ENCODE measurements at regions of chr17 and their contacts with region 1.

Region 1: DNA sequence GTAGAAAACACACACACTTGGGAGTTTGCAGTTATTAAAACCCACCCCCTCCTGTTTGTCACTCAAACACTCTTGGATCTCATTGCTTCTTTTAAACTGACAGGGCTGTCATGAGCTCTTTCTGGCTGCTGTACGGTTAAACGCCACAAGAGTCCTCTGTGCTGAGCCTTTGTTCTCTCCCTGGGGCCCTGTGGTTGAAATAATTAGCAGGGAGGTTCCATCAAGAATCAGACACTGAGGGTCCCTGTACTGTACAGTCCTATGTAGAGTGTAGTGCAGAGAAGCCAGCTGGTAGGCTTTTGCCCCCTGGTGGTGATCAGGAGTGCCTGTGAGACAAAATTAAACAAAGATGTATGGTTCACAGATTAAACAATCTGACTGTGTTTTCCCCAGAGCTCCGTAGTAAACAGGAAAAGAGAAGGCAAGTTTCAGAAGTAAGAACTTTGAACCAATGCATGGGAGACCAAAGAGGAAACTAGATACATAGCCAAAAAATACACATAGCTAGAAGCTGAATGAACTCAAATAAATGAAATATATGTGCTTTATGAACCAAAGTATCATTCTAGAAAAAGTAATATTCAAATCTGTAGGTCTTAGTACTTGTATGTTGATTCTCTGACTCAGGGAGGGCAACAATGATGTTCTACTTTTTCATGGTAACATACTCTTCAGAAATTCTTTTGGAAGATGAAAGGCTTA is 1.4 kb upstream of the SSH2 start:
- DNase-seq: peak; percentile 29 to 89 (median 78)
- ATAC-seq: peak; percentile 84
- H3K4me3 ChIP-seq: peak overlapping the region; percentile 81
- H3K4me3 Mint-ChIP-seq: no peak overlapping the region
- H3K27ac ChIP-seq: peak overlapping the region; percentile 85
- H3K27ac Mint-ChIP-seq: no peak overlapping the region
- H3K4me1 ChIP-seq: peaks cover 13 to 25% of the 10 kb centered on the region in 2 donors
- H3K4me1 Mint-ChIP-seq: peaks cover 24 to 35% (median 27%) of the 10 kb centered on the region in 7 donors
- H3K27me3 ChIP-seq: no peaks in the 10 kb centered on the region
- H3K27me3 Mint-ChIP-seq: peaks cover 0 to 2% (median 0%) of the 10 kb centered on the region in 5 donors

Region 2: GRCh38 chr17:29389982-29390850 is 541.2 kb before region 1 on chr17 and contains the start of gene TAOK1:
- CTCF ChIA-PET with region 1: no interaction called
- POLR2A ChIA-PET with region 1: no interaction called
- intact Hi-C with region 1: loop called in 1 of 2 experiments (anchors 5 kb)
- DNase-seq: peak; percentile 93 to 98 (median 96)
- ATAC-seq: peak; percentile 97
- H3K4me3 ChIP-seq: peak within 1 kb of the TSS; percentile 94
- H3K4me3 Mint-ChIP-seq: peak within 1 kb of the TSS; percentile 95 to 99 (median 98)
- H3K27ac ChIP-seq: peak within 1 kb of the TSS; percentile 98
- H3K27ac Mint-ChIP-seq: peak within 1 kb of the TSS; percentile 92 to 98 (median 97)
- H3K4me1 ChIP-seq: peaks cover 14 to 25% of the 10 kb centered on the region in 2 donors
- H3K4me1 Mint-ChIP-seq: peaks cover 36 to 49% (median 44%) of the 10 kb centered on the region in 7 donors
- H3K27me3 ChIP-seq: no peaks in the 10 kb centered on the region
- H3K27me3 Mint-ChIP-seq: peaks cover 0 to 2% (median 0%) of the 10 kb centered on the region in 5 donors
- total RNA-seq, gene TAOK1: 62.4 to 70.1 (median 66.5) TPM

Region 3: GRCh38 chr17:29589524-29590410 is 341.6 kb before region 1 on chr17 and contains the start of gene GIT1:
- CTCF ChIA-PET with region 1: interaction called, 7 read pairs
- POLR2A ChIA-PET with region 1: interaction called, 6 read pairs
- intact Hi-C with region 1: loop called (anchors 1 kb)
- DNase-seq: peak; percentile 77 to 88 (median 84)
- ATAC-seq: peak; percentile 93
- H3K4me3 ChIP-seq: peak within 1 kb of the TSS; percentile 72
- H3K4me3 Mint-ChIP-seq: peak within 1 kb of the TSS; percentile 88 to 96 (median 94)
- H3K27ac ChIP-seq: peak within 1 kb of the TSS; percentile 75
- H3K27ac Mint-ChIP-seq: peak within 1 kb of the TSS; percentile 78 to 94 (median 89)
- H3K4me1 ChIP-seq: peaks cover 58 to 65% of the 10 kb centered on the region in 2 donors
- H3K4me1 Mint-ChIP-seq: peaks cover 35 to 73% (median 66%) of the 10 kb centered on the region in 7 donors
- H3K27me3 ChIP-seq: no peaks in the 10 kb centered on the region
- H3K27me3 Mint-ChIP-seq: no peaks in the 10 kb centered on the region
- total RNA-seq, gene GIT1: 42.5 to 76.3 (median 62.4) TPM

Region 4: GRCh38 chr17:29807520-29808351 is 123.6 kb before region 1 on chr17:
- CTCF ChIA-PET with region 1: interaction called, 196 read pairs
- POLR2A ChIA-PET with region 1: interaction called, 64 read pairs
- intact Hi-C with region 1: loop called (anchors 1 kb)
- DNase-seq: peak; percentile 26 to 75 (median 64)
- ATAC-seq: peak; percentile 93
- H3K4me3 ChIP-seq: no peak overlapping the region
- H3K4me3 Mint-ChIP-seq: peak overlapping the region in 3 of 10 donors; percentile 1 to 56 (median 30)
- H3K27ac ChIP-seq: no peak overlapping the region
- H3K27ac Mint-ChIP-seq: peak overlapping the region in 4 of 9 donors; percentile 6 to 43 (median 38)
- H3K4me1 ChIP-seq: peaks cover 0 to 10% of the 10 kb centered on the region in 2 donors
- H3K4me1 Mint-ChIP-seq: peaks cover 13 to 36% (median 25%) of the 10 kb centered on the region in 7 donors
- H3K27me3 ChIP-seq: no peaks in the 10 kb centered on the region
- H3K27me3 Mint-ChIP-seq: no peaks in the 10 kb centered on the region

Region 5: GRCh38 chr17:29918922-29919856 is 12.2 kb before region 1 on chr17:
- CTCF ChIA-PET with region 1: interaction called, 15 read pairs
- POLR2A ChIA-PET with region 1: interaction called, 7 read pairs
- intact Hi-C with region 1: no loop called
- DNase-seq: no peak
- ATAC-seq: no peak
- H3K4me3 ChIP-seq: no peak overlapping the region
- H3K4me3 Mint-ChIP-seq: no peak overlapping the region
- H3K27ac ChIP-seq: no peak overlapping the region
- H3K27ac Mint-ChIP-seq: peak overlapping the region in 4 of 9 donors; percentile 34 to 66 (median 41)
- H3K4me1 ChIP-seq: no peaks in the 10 kb centered on the region
- H3K4me1 Mint-ChIP-seq: peaks cover 17 to 40% (median 26%) of the 10 kb centered on the region in 7 donors
- H3K27me3 ChIP-seq: no peaks in the 10 kb centered on the region
- H3K27me3 Mint-ChIP-seq: no peaks in the 10 kb centered on the region

Region 6: GRCh38 chr17:30093463-30094147 is 162.2 kb after region 1 on chr17:
- CTCF ChIA-PET with region 1: interaction called, 3 read pairs
- POLR2A ChIA-PET with region 1: no interaction called
- intact Hi-C with region 1: loop called in 1 of 2 experiments (anchors 5 kb)
- DNase-seq: peak; percentile 13 to 71 (median 40)
- ATAC-seq: peak; percentile 78
- H3K4me3 ChIP-seq: no peak overlapping the region
- H3K4me3 Mint-ChIP-seq: peak overlapping the region in 1 of 10 donors; percentile 11
- H3K27ac ChIP-seq: no peak overlapping the region
- H3K27ac Mint-ChIP-seq: no peak overlapping the region
- H3K4me1 ChIP-seq: no peaks in the 10 kb centered on the region
- H3K4me1 Mint-ChIP-seq: peaks cover 0 to 8% (median 5%) of the 10 kb centered on the region in 7 donors
- H3K27me3 ChIP-seq: no peaks in the 10 kb centered on the region
- H3K27me3 Mint-ChIP-seq: peaks cover 21 to 56% (median 33%) of the 10 kb centered on the region in 5 donors

Measured in naive thymus-derived CD4-positive, alpha-beta T cell (primary cell).